ENCODE measurements at regions of chr12 and their contacts with region 1.

Region 1: GRCh38 chr12:7092229-7092985 is at the start of gene C1R:
- DNase-seq: peak in 1 of 2 experiments; percentile 76
- H3K4me3 ChIP-seq: peak within 1 kb of the TSS; percentile 41; the same call in 1 of the 2 replicates
- H3K27ac ChIP-seq: no peak within 1 kb of the TSS
- H3K4me1 ChIP-seq: no peaks in the 10 kb centered on the region
- H3K27me3 ChIP-seq: no peaks in the 10 kb centered on the region
- CTCF ChIP-seq: peak; percentile 93
- total RNA-seq, gene C1R: 20.5 and 24.0 TPM in 2 replicates

Region 2: GRCh38 chr12:6927379-6928024 is 164.9 kb before region 1 on chr12 and contains the start of gene ATN1:
- CTCF ChIA-PET with region 1: no interaction called
- POLR2A ChIA-PET with region 1: interaction called, 7 read pairs
- intact Hi-C with region 1: loop called (anchors 1 kb)
- DNase-seq: peak in 1 of 2 experiments; percentile 66
- H3K4me3 ChIP-seq: peak within 1 kb of the TSS; percentile 85
- H3K27ac ChIP-seq: peak within 1 kb of the TSS; percentile 75
- H3K4me1 ChIP-seq: peaks cover 53% of the 10 kb centered on the region
- H3K27me3 ChIP-seq: no peaks in the 10 kb centered on the region
- CTCF ChIP-seq: no peak
- total RNA-seq, gene ATN1: 158 and 159 TPM in 2 replicates

Region 3: DNA sequence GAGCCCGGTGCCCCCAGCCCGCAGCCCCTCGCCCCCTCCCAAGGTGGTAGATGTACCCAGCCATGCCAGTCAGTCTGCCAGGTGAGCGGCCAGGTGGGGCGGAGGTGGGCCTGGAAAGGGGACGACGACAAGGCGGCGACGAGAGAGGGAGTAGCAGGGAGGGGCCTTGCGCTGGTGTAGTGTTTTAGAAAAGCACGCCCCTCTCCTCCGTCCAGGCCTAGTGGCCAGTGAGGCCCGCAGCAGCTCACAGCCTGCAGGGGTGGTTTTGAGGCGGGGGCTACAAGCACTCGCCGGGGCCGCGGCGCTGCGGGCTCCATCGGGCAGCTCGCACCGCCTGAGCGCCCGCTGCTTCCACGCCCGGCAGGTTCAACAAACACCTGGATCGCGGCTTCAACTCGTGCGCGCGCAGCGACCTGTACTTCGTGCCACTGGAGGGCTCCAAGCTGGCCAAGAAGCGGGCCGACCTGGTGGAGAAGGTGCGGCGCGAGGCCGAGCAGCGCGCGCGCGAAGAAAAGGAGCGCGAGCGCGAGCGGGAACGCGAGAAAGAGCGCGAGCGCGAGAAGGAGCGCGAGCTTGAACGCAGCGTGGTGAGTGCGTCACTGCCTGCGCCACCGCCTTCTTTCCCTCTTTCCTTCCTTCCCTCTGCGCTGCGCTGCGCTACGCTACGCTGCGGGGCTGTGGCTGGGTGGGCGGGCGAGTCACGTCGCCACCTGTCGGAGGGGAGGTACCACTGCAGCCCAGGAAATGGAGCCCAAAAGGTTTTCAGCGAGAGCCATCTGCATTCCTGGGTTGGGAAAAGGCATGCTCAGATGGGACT is 154.7 kb before region 1 on chr12:
- CTCF ChIA-PET with region 1: no interaction called
- POLR2A ChIA-PET with region 1: interaction called, 19 read pairs
- intact Hi-C with region 1: no loop called
- DNase-seq: peak; percentile 92 to 97
- H3K4me3 ChIP-seq: peak overlapping the region; percentile 62
- H3K27ac ChIP-seq: peak overlapping the region; percentile 52
- H3K4me1 ChIP-seq: peaks cover 8% of the 10 kb centered on the region
- H3K27me3 ChIP-seq: no peaks in the 10 kb centered on the region
- CTCF ChIP-seq: peak; percentile 98

Region 4: DNA sequence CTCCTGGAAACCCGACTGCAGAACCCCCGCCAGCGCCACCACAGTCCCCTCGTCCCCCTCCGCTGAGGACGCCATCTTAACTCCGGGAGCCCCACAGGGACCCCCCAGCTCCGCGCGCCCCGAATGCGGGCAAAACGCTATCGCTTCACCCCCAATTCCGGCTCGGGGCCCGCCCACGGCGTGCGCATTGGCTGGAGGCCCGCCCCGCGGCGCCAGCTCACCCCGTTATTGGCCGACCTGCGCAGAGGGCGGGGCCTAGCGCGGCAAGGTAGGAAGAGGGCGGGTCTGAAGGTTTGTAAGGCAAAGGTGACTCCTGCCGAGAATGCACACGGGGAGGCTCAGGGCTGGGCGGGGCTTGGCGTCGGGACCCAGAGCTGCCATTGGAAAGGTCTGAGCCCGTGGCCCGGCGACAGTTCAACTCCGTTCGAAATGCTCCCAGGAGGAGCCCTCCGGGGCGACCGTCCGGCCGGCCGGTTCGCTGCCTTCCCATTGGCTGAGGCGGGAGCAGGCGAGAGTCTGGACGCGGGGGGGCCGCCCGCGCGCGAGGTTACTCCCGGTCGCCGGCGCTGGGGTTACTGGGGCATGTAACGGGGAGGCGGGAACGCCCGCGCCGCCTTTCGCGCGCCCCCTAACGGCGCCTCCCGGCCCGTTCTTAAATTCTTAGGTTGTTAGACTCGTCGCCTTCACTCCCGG is 73.9 kb before region 1 on chr12 and contains the start of gene LPCAT3:
- CTCF ChIA-PET with region 1: interaction called, 3 read pairs
- POLR2A ChIA-PET with region 1: interaction called, 4 read pairs
- intact Hi-C with region 1: loop called (anchors 1 kb)
- DNase-seq: peak; percentile 96 to 100
- H3K4me3 ChIP-seq: peak within 1 kb of the TSS; percentile 79
- H3K27ac ChIP-seq: peak within 1 kb of the TSS; percentile 74
- H3K4me1 ChIP-seq: peaks cover 37% of the 10 kb centered on the region
- H3K27me3 ChIP-seq: no peaks in the 10 kb centered on the region
- CTCF ChIP-seq: peak; percentile 83
- total RNA-seq, gene LPCAT3: 53.8 and 102 TPM in 2 replicates

Region 5: GRCh38 chr12:7060353-7060954 is 32.0 kb before region 1 on chr12 and contains the start of gene C1S:
- CTCF ChIA-PET with region 1: interaction called, 3 read pairs
- POLR2A ChIA-PET with region 1: interaction called, 5 read pairs
- intact Hi-C with region 1: loop called (anchors 1 kb)
- DNase-seq: peak; percentile 68 to 69
- H3K4me3 ChIP-seq: no peak within 1 kb of the TSS
- H3K27ac ChIP-seq: no peak within 1 kb of the TSS
- H3K4me1 ChIP-seq: peaks cover 16% of the 10 kb centered on the region; the same call in 1 of the 2 replicates
- H3K27me3 ChIP-seq: peaks cover 2% of the 10 kb centered on the region; the same call in 1 of the 2 replicates
- CTCF ChIP-seq: peak; percentile 73
- total RNA-seq, gene C1S: 32.4 and 32.9 TPM in 2 replicates

Region 6: GRCh38 chr12:7079826-7080125 is 12.6 kb before region 1 on chr12:
- CTCF ChIA-PET with region 1: interaction called, 11 read pairs
- POLR2A ChIA-PET with region 1: no interaction called
- intact Hi-C with region 1: no loop called
- DNase-seq: peak; percentile 48 to 84
- H3K4me3 ChIP-seq: peak overlapping the region; percentile 16; the same call in 1 of the 2 replicates
- H3K27ac ChIP-seq: peak overlapping the region; percentile 92
- H3K4me1 ChIP-seq: peaks cover 19% of the 10 kb centered on the region
- H3K27me3 ChIP-seq: no peaks in the 10 kb centered on the region
- CTCF ChIP-seq: no peak

Region 7: DNA sequence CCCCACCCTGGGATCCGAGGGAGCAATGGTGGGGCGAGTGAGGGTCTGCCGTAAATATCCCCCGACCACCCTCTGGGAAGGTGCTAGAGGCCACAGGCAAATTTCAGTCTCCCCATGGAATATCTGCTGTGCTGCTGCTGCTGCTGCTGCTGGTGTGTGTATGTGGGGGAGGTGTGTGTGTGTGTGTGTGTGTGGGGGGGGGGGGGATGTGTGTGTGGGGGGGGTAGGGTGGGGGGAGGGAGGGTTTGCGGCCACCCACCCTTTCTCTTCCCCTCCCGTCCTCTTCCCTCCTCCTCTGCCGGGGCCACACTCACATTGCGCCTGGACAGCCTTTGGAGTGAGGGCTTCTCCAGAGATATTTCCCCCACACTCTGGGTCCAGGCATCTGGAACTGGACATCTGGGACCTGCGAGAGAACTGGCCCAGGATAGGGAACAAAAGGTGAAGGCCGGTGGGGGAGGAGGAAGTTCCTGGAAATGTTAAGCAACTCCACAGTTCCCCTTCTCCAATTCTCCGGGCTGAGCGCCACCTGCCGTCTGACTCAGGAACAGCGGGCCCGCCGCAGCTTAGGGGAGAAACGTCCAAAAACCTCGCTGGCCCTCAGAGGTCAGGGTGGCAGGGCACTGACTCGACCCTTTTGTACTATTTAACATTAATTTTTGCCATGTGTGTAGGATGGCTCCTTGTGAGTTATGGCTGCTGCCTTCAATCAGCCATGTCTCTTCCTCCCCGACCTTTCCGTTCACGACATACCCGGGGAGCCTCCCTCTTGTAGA is 16.6 kb after region 1 on chr12 and contains the start of gene C1RL:
- CTCF ChIA-PET with region 1: interaction called, 4 read pairs
- POLR2A ChIA-PET with region 1: interaction called, 7 read pairs
- intact Hi-C with region 1: loop called (anchors 1 kb)
- DNase-seq: peak; percentile 72 to 91
- H3K4me3 ChIP-seq: peak within 1 kb of the TSS; percentile 79
- H3K27ac ChIP-seq: peak within 1 kb of the TSS; percentile 76
- H3K4me1 ChIP-seq: peaks cover 28% of the 10 kb centered on the region
- H3K27me3 ChIP-seq: no peaks in the 10 kb centered on the region
- CTCF ChIP-seq: peak; percentile 97
- total RNA-seq, gene C1RL: 70.4 and 72.9 TPM in 2 replicates

Region 8: GRCh38 chr12:7210642-7211151 is 118.3 kb after region 1 on chr12:
- CTCF ChIA-PET with region 1: no interaction called
- POLR2A ChIA-PET with region 1: no interaction called
- intact Hi-C with region 1: no loop called
- DNase-seq: no peak
- H3K4me3 ChIP-seq: no peak overlapping the region
- H3K27ac ChIP-seq: no peak overlapping the region
- H3K4me1 ChIP-seq: no peaks in the 10 kb centered on the region
- H3K27me3 ChIP-seq: no peaks in the 10 kb centered on the region
- CTCF ChIP-seq: no peak

Region 9: DNA sequence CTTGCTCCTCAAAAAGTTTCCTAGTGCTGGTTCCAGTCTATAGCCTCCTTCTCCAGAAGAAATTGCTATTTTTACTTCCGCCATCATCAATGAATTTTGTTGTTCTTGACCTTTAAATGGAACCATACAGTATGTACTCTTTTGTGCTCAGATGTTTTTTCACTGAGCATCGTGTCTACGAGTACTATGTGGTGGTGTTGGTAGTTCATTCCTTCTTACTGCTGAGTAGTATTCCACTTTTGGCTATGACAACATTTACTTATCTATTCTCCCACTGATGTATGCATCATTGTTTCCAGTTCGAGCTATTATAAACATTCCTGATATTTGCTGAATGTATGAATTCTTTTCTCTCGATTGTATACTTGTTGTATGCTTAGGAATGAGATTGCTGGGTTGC is 751.7 kb after region 1 on chr12:
- CTCF ChIA-PET with region 1: no interaction called
- POLR2A ChIA-PET with region 1: no interaction called
- intact Hi-C with region 1: no loop called
- DNase-seq: no peak
- H3K4me3 ChIP-seq: no peak overlapping the region
- H3K27ac ChIP-seq: no peak overlapping the region
- H3K4me1 ChIP-seq: no peaks in the 10 kb centered on the region
- H3K27me3 ChIP-seq: no peaks in the 10 kb centered on the region
- CTCF ChIP-seq: no peak